ENCODE measurements at regions of chr15 and their contacts with region 1.

Region 1: GRCh38 chr15:66386204-66387123 is at the start of gene MAP2K1:
- DNase-seq: peak; percentile 99
- H3K4me3 Mint-ChIP-seq: peak within 1 kb of the TSS; percentile 98
- H3K27ac Mint-ChIP-seq: peak within 1 kb of the TSS; percentile 97
- H3K4me1 Mint-ChIP-seq: peaks cover 50% of the 10 kb centered on the region
- H3K27me3 Mint-ChIP-seq: no peaks in the 10 kb centered on the region
- total RNA-seq, gene MAP2K1: 87.6 to 89.0 TPM

Region 2: GRCh38 chr15:66169023-66169422 is 217.4 kb before region 1 on chr15:
- CTCF ChIA-PET with region 1: no interaction called
- POLR2A ChIA-PET with region 1: no interaction called
- DNase-seq: no peak
- H3K4me3 Mint-ChIP-seq: no peak overlapping the region
- H3K27ac Mint-ChIP-seq: no peak overlapping the region
- H3K4me1 Mint-ChIP-seq: no peaks in the 10 kb centered on the region
- H3K27me3 Mint-ChIP-seq: no peaks in the 10 kb centered on the region

Region 3: GRCh38 chr15:66323312-66323928 is 63.0 kb before region 1 on chr15:
- CTCF ChIA-PET with region 1: no interaction called
- POLR2A ChIA-PET with region 1: no interaction called
- DNase-seq: no peak
- H3K4me3 Mint-ChIP-seq: no peak overlapping the region
- H3K27ac Mint-ChIP-seq: no peak overlapping the region
- H3K4me1 Mint-ChIP-seq: no peaks in the 10 kb centered on the region
- H3K27me3 Mint-ChIP-seq: no peaks in the 10 kb centered on the region

Region 4: DNA sequence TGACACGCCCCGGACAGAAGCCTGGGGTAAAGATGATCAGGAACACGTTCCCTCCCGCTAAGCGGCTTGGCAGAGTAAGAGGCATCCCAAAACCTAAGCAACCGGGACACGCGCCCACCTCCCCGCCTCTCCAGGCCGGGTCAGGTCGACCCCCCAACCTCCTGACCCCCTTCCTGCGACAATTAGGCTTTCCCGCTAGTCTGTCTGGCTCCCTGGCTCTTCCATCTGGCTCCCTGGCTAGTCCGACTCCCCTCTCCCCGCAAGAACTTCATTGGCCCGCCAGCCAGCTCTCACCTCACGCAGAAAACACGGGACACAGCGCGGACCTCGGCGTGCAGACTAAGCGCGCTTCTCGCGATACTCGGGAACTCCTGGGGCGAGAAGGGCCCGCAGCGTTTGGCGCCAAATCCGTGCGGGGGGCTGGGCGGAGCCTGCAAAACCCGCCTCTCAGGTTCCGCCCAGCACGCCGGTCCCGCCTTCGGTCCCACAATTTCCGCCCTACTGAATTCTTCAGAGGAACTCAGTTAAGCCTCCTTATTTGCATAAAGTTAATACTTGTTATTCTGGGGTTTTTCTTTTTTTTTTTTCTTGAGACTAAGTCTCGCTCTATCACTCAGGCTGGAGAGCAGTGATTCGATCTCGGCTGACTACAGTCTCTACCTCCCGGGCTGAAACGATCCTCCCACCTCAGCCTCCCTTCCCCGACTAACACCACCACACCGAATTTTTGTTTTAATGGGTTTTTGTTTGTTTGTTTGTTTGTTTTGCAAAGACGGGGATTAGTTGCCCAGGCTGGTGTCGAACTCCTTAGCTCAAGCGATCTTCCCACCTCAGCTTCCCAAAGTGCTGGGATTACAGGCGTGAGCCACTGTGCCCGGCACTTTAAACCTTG is 29.9 kb before region 1 on chr15 and contains the start of gene TIPIN:
- CTCF ChIA-PET with region 1: interaction called, 7 read pairs
- POLR2A ChIA-PET with region 1: interaction called, 43 read pairs
- DNase-seq: peak; percentile 99
- H3K4me3 Mint-ChIP-seq: peak within 1 kb of the TSS; percentile 93
- H3K27ac Mint-ChIP-seq: peak within 1 kb of the TSS; percentile 93
- H3K4me1 Mint-ChIP-seq: peaks cover 37% of the 10 kb centered on the region
- H3K27me3 Mint-ChIP-seq: no peaks in the 10 kb centered on the region
- total RNA-seq, gene TIPIN: 27.2 to 28.9 TPM

Region 5: GRCh38 chr15:66401130-66402021 is 14.9 kb after region 1 on chr15:
- CTCF ChIA-PET with region 1: interaction called, 12 read pairs
- POLR2A ChIA-PET with region 1: interaction called, 11 read pairs
- DNase-seq: peak; percentile 48
- H3K4me3 Mint-ChIP-seq: peak overlapping the region; percentile 66
- H3K27ac Mint-ChIP-seq: peak overlapping the region; percentile 75
- H3K4me1 Mint-ChIP-seq: peaks cover 62% of the 10 kb centered on the region
- H3K27me3 Mint-ChIP-seq: no peaks in the 10 kb centered on the region

Region 6: DNA sequence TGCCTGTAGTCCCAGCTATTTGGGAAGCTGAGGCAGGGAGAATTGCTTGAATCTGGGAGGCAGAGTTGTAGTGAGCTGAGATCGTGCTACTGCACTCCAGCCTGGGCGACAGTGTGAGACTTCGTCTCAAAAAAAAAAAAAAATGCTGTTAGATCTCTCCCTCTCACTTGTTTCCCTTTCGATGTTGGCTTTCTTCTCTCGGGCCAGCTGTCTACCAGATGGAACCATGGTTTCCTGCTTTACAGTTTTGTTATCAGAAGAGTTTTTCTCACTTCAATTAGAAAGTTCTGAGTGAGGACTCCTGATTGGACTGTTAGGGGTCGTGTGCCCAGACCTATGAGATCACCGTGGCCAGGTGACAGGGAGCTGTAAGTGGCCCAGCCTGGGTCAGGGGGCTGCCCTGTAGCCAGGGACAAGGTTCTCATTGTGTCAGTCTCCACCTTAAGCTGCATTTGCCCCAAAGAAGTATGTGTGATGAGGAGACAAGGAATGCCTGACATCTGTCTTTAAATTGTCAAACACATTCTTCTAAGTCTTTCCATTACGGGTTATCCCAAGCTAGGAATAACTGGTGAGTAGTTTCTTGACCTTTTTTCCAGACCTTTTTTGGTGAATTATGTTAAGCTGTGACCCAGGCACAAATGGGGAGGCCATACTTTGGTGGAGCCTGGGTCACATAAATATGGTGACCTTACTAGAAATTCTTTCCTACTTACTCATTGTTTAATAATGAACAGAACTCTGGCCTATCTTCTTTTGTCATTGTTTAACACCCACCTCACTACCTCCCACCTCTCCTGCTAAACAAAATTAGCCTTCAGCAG is 85.9 kb after region 1 on chr15:
- CTCF ChIA-PET with region 1: interaction called, 18 read pairs
- POLR2A ChIA-PET with region 1: interaction called, 4 read pairs
- DNase-seq: peak; percentile 39
- H3K4me3 Mint-ChIP-seq: peak overlapping the region; percentile 2
- H3K27ac Mint-ChIP-seq: peak overlapping the region; percentile 70
- H3K4me1 Mint-ChIP-seq: peaks cover 31% of the 10 kb centered on the region
- H3K27me3 Mint-ChIP-seq: no peaks in the 10 kb centered on the region

Region 7: DNA sequence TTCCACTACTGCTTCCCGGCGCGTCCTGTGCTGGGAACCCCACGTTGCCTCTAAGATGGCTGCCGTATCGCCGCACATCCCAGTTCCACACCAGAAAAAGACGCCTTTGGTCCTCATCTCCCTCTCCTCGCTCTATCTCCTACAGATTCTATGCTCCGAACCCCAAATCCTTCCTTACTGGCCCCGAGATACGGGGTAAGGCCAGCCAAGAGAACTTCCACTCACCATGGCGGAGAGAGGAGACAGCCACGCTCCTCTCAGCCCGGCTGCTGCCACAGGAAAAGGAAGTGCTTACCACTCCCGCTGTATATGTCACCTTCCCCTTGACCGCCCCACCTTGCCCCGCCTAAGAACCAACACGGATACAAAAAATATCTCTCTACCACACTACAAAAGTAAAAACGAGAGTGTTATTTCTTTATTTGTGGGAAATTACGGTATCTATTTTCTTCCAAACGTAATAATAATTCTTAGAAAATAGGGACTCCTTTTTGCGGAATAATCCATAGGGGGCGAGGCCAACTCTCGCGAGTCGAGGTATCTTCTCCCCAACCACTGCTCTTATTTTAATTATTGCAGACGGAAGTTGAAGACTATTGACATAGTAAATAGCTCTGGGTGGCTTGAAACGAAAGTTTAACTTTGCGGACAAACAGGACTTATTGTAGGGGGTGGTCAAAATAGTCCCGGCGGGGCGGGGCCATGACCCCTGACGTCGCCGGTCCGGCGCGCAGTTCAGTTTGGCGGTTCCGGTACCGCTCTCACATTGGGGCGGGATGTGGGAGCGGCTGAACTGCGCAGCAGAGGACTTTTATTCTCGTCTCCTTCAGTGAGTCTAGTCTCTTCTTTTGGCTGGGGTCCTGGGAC is 118.3 kb after region 1 on chr15 and contains the starts of genes RPL4 and ZWILCH:
- CTCF ChIA-PET with region 1: interaction called, 8 read pairs
- POLR2A ChIA-PET with region 1: interaction called, 110 read pairs
- DNase-seq: peak; percentile 84
- H3K4me3 Mint-ChIP-seq: peak within 1 kb of the TSS; percentile 92
- H3K27ac Mint-ChIP-seq: peak within 1 kb of the TSS; percentile 96
- H3K4me1 Mint-ChIP-seq: peaks cover 66% of the 10 kb centered on the region
- H3K27me3 Mint-ChIP-seq: no peaks in the 10 kb centered on the region
- total RNA-seq, gene RPL4: 2,309 to 2,338 TPM
- total RNA-seq, gene ZWILCH: 28.9 to 30.0 TPM

Measured in activated CD4-positive, alpha-beta memory T cell treated with anti-CD3 and anti-CD28 coated beads, Interleukin-2, amount 10 ng/mL, durations not matched to agents 7 days and 5 days (primary cell).